WTC11 (cell line): ENCODE measurements at regions of chr19 and their contacts with region 1.

Region 1: GRCh38 chr19:7394731-7395359 is 46.1 kb downstream of the ARHGEF18 start:
- DNase-seq: peak; percentile 91
- ATAC-seq: peak; percentile 83
- H3K4me3 Mint-ChIP-seq: peak overlapping the region; percentile 86
- H3K27ac Mint-ChIP-seq: no peak overlapping the region
- H3K4me1 Mint-ChIP-seq: peaks cover 23% of the 10 kb centered on the region
- H3K27me3 Mint-ChIP-seq: no peaks in the 10 kb centered on the region; the same call in 1 of the 2 replicates
- CTCF ChIP-seq: no peak

Region 2: DNA sequence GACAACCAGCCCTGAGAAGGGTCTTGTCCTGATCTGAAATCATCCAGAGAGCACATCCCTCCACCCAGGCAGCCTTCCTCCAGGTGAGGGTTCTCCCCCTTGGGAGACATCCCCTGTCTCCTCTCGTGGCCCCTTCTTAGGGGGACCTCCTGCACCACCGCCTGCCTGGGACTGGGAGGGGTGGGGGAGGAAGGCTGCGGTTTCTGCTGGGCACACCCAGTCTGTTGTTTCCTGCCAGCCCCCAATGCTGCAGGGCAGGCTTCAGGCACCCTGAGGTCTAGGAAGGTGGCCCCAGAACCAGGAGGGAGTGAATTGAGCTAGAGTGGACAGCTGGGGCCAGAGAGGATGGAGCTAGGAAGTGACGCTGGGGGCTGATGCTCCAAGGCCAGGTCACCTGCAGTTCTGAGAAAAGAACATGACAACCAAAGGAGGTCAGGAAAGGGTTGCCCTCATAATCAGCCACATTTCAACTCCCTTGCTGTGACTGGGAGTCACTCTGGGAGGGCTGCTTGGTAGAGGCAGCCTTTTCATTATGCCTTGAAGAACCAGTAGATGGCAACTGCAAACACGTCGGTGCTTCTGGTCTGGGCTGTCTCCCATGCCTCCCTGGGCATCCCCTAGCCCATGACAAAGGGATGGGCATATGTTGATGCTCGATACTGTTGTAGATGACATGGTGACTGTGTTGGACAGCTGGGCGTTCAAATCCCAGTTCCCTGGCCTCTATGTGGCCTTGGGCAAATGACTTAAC is 44.7 kb before region 1 on chr19:
- CTCF ChIA-PET with region 1: interaction called, 12 read pairs
- POLR2A ChIA-PET with region 1: no interaction called
- DNase-seq: no peak
- ATAC-seq: no peak
- H3K4me3 Mint-ChIP-seq: no peak overlapping the region
- H3K27ac Mint-ChIP-seq: no peak overlapping the region
- H3K4me1 Mint-ChIP-seq: peaks cover 6% of the 10 kb centered on the region; the same call in 1 of the 2 replicates
- H3K27me3 Mint-ChIP-seq: peaks cover 13% of the 10 kb centered on the region
- CTCF ChIP-seq: no peak